ENCODE measurements at regions of chr5 and their contacts with region 1.

Region 1: GRCh38 chr5:95664204-95664786 is 17.7 kb downstream of the RFESD start:
- DNase-seq: peak in 2 of 4 experiments; percentile 23 to 66
- ATAC-seq: peak; percentile 24
- H3K4me3 ChIP-seq: no peak overlapping the region
- H3K27ac ChIP-seq: peak overlapping the region; percentile 39
- H3K4me1 ChIP-seq: peaks cover 0 to 16% of the 10 kb centered on the region in 2 experiments; a peak in 3 of 5 replicates
- H3K27me3 ChIP-seq: no peaks in the 10 kb centered on the region
- CTCF ChIP-seq: peak; percentile 48 to 83 (median 66); a peak in 5 of 6 replicates
- EP300 ChIP-seq: no peak
- POLR2A ChIP-seq: no peak; the same call in none of the 2 replicates
- RAD21 ChIP-seq: peak; percentile 84 to 89

Region 2: GRCh38 chr5:95712347-95712958 is 48.2 kb after region 1 on chr5:
- CTCF ChIA-PET with region 1: no interaction called
- POLR2A ChIA-PET with region 1: interaction called, 7 read pairs
- in situ Hi-C with region 1: no loop called
- intact Hi-C with region 1: loop called (anchors 2 kb)
- DNase-seq: peak; percentile 82 to 97 (median 87)
- ATAC-seq: peak; percentile 87
- H3K4me3 ChIP-seq: peak overlapping the region; percentile 51; the same call in 1 of the 2 replicates
- H3K27ac ChIP-seq: peak overlapping the region; percentile 99
- H3K4me1 ChIP-seq: peaks cover 25 to 63% of the 10 kb centered on the region in 2 experiments
- H3K27me3 ChIP-seq: no peaks in the 10 kb centered on the region
- CTCF ChIP-seq: no peak
- EP300 ChIP-seq: peak; percentile 100
- POLR2A ChIP-seq: peak; percentile 83
- RAD21 ChIP-seq: peak in 1 of 2 experiments; percentile 37; a peak in 2 of 4 replicates

Measured in K562 (cell line).